Psoas muscle (tissue), 8 donors: ENCODE measurements at regions of chr10 and their contacts with region 1.

Region 1: GRCh38 chr10:21495752-21496342 is 29.6 kb downstream of the SKIDA1 start:
- DNase-seq: peak; percentile 82 to 91
- ATAC-seq: peak; percentile 89 to 94 (median 92)
- H3K4me3 ChIP-seq: peak overlapping the region; percentile 83
- H3K27ac ChIP-seq: peak overlapping the region; percentile 30
- H3K4me1 ChIP-seq: no peaks in the 10 kb centered on the region
- H3K27me3 ChIP-seq: peaks cover 0 to 4% (median 1%) of the 10 kb centered on the region in 3 donors
- CTCF ChIP-seq: peak; percentile 98

Region 2: DNA sequence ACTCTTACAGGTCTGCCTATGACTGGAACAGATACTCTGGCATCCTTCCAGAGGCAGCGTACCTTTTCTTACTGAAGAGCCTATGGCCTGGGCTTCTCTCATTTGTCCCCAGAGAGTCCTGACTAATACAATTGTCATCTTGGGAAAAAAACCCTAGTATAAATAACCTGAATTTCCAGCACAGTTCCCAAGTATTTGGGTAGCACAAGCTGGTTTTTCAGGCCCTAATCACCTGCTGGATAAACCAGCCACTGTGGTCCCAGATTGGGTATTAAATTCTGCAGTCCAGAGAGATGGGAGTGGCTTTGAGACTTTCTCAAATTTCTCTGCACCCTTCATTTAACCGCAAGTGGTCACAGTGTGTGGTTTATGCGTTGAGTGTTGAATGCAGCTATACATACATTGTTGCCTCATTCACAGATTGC is 412.0 kb before region 1 on chr10:
- intact Hi-C with region 1: loop called in 1 of 2 experiments (anchors 10 kb)
- DNase-seq: no peak
- ATAC-seq: no peak
- H3K4me3 ChIP-seq: no peak overlapping the region
- H3K27ac ChIP-seq: no peak overlapping the region
- H3K4me1 ChIP-seq: no peaks in the 10 kb centered on the region
- H3K27me3 ChIP-seq: peaks cover 0 to 2% (median 0%) of the 10 kb centered on the region in 3 donors
- CTCF ChIP-seq: no peak

Region 3: GRCh38 chr10:21424459-21424861 is 71.4 kb before region 1 on chr10:
- intact Hi-C with region 1: no loop called
- DNase-seq: no peak
- ATAC-seq: no peak
- H3K4me3 ChIP-seq: no peak overlapping the region
- H3K27ac ChIP-seq: no peak overlapping the region
- H3K4me1 ChIP-seq: no peaks in the 10 kb centered on the region
- H3K27me3 ChIP-seq: no peaks in the 10 kb centered on the region
- CTCF ChIP-seq: no peak

Region 4: GRCh38 chr10:21732067-21732772 is 236.4 kb after region 1 on chr10:
- intact Hi-C with region 1: loop called (anchors 2 kb)
- DNase-seq: peak; percentile 52 to 82
- ATAC-seq: peak; percentile 87 to 97 (median 94)
- H3K4me3 ChIP-seq: no peak overlapping the region
- H3K27ac ChIP-seq: no peak overlapping the region
- H3K4me1 ChIP-seq: no peaks in the 10 kb centered on the region
- H3K27me3 ChIP-seq: no peaks in the 10 kb centered on the region
- CTCF ChIP-seq: peak; percentile 85

Region 5: GRCh38 chr10:22003079-22003913 is 507.4 kb after region 1 on chr10 and contains the start of gene DNAJC1:
- intact Hi-C with region 1: loop called (anchors 5 kb)
- DNase-seq: peak; percentile 99
- ATAC-seq: peak; percentile 97 to 99 (median 98)
- H3K4me3 ChIP-seq: peak within 1 kb of the TSS; percentile 78
- H3K27ac ChIP-seq: peak within 1 kb of the TSS; percentile 94
- H3K4me1 ChIP-seq: peaks cover 12% of the 10 kb centered on the region
- H3K27me3 ChIP-seq: no peaks in the 10 kb centered on the region
- CTCF ChIP-seq: no peak
- total RNA-seq, gene DNAJC1: 6.7 to 18.8 (median 11.3) TPM

Region 6: DNA sequence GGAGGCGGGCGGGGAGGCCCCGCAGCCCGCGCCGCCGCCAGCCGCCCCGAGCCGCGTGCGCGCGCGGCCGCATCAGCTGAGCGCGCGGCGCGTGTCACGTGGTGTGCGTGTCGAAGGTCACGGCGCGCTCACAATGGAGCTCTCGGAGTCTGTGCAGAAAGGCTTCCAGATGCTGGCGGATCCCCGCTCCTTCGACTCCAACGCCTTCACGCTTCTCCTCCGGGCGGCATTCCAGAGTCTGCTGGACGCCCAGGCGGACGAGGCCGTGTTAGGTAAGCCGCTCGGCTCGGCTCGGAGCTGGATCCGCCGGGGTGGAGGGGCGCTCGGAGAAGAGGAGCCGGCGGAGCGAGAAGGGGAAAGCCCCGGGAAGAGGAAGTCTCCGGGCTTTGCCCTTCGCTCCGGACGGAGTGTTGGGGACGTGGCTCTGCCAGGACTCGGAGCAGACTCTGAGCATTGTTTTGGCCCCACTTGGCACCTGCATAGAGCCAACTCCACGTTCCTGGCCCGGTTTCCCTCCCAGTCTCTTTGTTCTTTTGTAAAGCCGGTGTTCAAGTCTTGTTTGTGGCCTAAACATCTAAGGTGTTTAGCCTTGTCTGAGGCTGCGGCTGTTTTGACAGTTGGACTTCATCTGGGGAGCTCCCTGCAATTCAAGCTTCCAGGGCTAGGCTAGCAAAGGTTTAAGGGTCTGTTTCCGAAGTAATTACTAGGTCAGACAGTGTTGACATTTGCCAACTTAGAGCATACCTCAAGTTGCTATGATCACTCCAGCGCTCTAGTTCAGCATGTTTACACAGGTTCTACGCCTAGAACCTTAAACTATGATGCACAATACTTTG is 820.7 kb after region 1 on chr10 and contains the start of gene COMMD3:
- intact Hi-C with region 1: loop called (anchors 10 kb)
- DNase-seq: peak; percentile 89 to 94
- ATAC-seq: peak; percentile 85 to 88 (median 86)
- H3K4me3 ChIP-seq: peak within 1 kb of the TSS; percentile 92
- H3K27ac ChIP-seq: peak within 1 kb of the TSS; percentile 95
- H3K4me1 ChIP-seq: peaks cover 28% of the 10 kb centered on the region
- H3K27me3 ChIP-seq: no peaks in the 10 kb centered on the region
- CTCF ChIP-seq: no peak
- total RNA-seq, gene COMMD3: 45.5 to 81.4 (median 64.8) TPM

Region 7: GRCh38 chr10:22988581-22989360 is 1492.9 kb after region 1 on chr10:
- intact Hi-C with region 1: loop called in 1 of 2 experiments (anchors 5 kb)
- DNase-seq: peak in 1 of 2 donors; percentile 16
- ATAC-seq: peak; percentile 61 to 89 (median 68)
- H3K4me3 ChIP-seq: no peak overlapping the region
- H3K27ac ChIP-seq: no peak overlapping the region
- H3K4me1 ChIP-seq: no peaks in the 10 kb centered on the region
- H3K27me3 ChIP-seq: no peaks in the 10 kb centered on the region
- CTCF ChIP-seq: peak; percentile 97